ENCODE measurements at regions of chr1 and their contacts with region 1.

Region 1: GRCh38 chr1:194975907-194976306 is 1632.3 kb downstream of the KCNT2 start:
- DNase-seq: no peak
- H3K4me3 ChIP-seq: no peak overlapping the region
- H3K27ac ChIP-seq: no peak overlapping the region
- H3K4me1 ChIP-seq: no peaks in the 10 kb centered on the region
- H3K27me3 ChIP-seq: no peaks in the 10 kb centered on the region
- CTCF ChIP-seq: no peak
- EP300 ChIP-seq: no peak
- POLR2A ChIP-seq: no peak

Region 2: DNA sequence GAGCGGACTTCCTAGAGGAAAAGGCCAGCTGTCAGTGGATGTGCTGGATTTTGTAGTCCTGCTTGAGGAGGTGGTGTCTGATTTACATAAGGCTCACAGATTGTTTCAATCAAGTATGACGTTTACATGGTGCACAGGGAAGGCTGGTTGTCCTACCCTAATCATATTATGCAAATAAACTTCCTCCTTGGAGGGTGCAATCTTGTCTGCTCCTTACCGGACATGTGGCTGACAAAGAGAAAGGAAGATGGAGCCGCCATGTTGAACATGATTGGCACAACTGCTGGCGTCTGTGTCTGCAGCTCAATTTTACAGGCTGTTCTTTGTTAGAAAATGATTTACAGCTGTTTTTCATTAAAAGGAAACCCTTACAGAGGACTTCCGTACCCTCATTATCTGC is 23.7 kb before region 1 on chr1:
- in situ Hi-C with region 1: no loop called
- intact Hi-C with region 1: loop called (anchors 1 kb)
- DNase-seq: no peak
- H3K4me3 ChIP-seq: no peak overlapping the region
- H3K27ac ChIP-seq: no peak overlapping the region
- H3K4me1 ChIP-seq: no peaks in the 10 kb centered on the region
- H3K27me3 ChIP-seq: no peaks in the 10 kb centered on the region
- CTCF ChIP-seq: no peak
- EP300 ChIP-seq: no peak
- POLR2A ChIP-seq: no peak